Activated CD4-positive, alpha-beta T cell treated with anti-CD3 and anti-CD28 coated beads, Interleukin-2, amount 10 ng/mL, durations not matched to agents 7 days and 5 days (primary cell): ENCODE measurements at regions of chr14 and their contacts with region 1.

Region 1: DNA sequence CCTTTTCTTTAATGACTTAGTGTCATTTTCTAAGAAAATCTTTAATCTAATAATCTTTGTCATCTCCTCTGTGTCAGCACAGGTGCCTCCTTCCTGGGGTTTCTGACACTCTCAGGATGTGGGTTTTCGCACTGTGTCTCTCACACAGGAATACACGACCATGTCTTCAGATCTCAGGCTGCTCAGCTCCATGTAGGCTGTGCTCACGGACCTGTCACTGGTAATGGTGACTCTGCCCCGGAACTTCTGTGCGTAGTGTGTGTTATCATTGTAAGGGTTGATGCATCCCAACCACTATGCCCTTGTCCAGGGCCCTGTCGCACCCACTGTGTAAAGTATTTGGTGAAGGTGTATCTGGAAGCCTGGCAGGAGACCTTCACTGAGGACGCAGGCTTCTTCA is 647.8 kb downstream of the TMEM121 start:
- DNase-seq: peak; percentile 80
- H3K4me3 Mint-ChIP-seq: peak overlapping the region; percentile 41
- H3K27ac Mint-ChIP-seq: peak overlapping the region; percentile 91
- H3K4me1 Mint-ChIP-seq: peaks cover 66% of the 10 kb centered on the region
- H3K27me3 Mint-ChIP-seq: peaks cover 15% of the 10 kb centered on the region

Region 2: GRCh38 chr14:106185837-106186233 is 11.6 kb after region 1 on chr14:
- CTCF ChIA-PET with region 1: interaction called, 12 read pairs
- POLR2A ChIA-PET with region 1: no interaction called
- DNase-seq: peak; percentile 75
- H3K4me3 Mint-ChIP-seq: no peak overlapping the region
- H3K27ac Mint-ChIP-seq: peak overlapping the region; percentile 73
- H3K4me1 Mint-ChIP-seq: peaks cover 37% of the 10 kb centered on the region
- H3K27me3 Mint-ChIP-seq: peaks cover 27% of the 10 kb centered on the region

Region 3: DNA sequence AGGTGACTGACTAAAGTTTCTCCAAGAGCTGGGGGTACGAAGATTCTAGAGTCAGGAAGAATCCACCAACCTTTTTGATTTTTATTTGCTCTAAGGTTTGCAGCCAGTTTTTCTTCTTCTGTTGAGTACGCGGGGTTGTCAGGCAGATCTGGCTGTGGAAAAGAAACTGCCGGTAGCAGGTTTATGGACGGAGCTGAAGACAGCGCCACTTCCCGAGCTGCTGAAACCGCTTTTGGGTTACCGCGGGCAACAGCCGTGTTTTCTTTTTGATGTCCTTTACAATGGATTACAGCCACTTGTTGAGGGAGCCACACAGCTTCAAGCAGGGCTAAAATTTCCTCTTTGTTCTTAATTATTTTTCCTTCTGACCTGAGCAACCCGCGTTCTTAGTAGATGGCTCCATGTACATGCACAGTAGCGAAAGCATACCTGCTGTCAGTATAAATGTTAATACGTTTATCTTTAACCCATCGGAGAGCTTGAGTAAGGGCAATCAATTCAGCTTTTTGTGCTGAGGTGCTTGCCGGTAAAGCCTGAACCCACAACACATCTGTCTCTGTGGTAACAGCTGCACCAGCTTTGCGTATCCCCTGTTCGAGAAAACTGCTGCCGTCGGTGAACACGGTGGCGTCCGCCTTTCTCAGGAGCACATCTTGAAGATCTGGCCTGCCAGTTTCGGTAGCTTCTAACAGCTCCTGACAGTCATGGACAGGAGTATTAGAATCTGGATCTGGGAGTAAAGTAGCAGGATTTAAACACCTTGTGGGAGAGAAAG is 26.5 kb after region 1 on chr14:
- CTCF ChIA-PET with region 1: interaction called, 10 read pairs
- POLR2A ChIA-PET with region 1: interaction called, 3 read pairs
- DNase-seq: peak; percentile 48
- H3K4me3 Mint-ChIP-seq: peak overlapping the region; percentile 23
- H3K27ac Mint-ChIP-seq: no peak overlapping the region
- H3K4me1 Mint-ChIP-seq: peaks cover 19% of the 10 kb centered on the region
- H3K27me3 Mint-ChIP-seq: peaks cover 45% of the 10 kb centered on the region